ENCODE measurements at regions of chr17 and their contacts with region 1.

Region 1: GRCh38 chr17:6640536-6641373 is at the starts of genes KIAA0753 and TXNDC17:
- DNase-seq: peak; percentile 97
- ATAC-seq: peak; percentile 89
- H3K4me3 Mint-ChIP-seq: peak within 1 kb of the TSS; percentile 89
- H3K27ac Mint-ChIP-seq: peak within 1 kb of the TSS; percentile 97
- H3K4me1 Mint-ChIP-seq: peaks cover 58% of the 10 kb centered on the region
- H3K27me3 Mint-ChIP-seq: no peaks in the 10 kb centered on the region
- CTCF ChIP-seq: no peak
- total RNA-seq, gene KIAA0753: 16.5 to 17.3 TPM
- total RNA-seq, gene TXNDC17: 100.0 to 103 TPM

Region 2: GRCh38 chr17:6473128-6473767 is 167.5 kb before region 1 on chr17:
- CTCF ChIA-PET with region 1: no interaction called
- POLR2A ChIA-PET with region 1: no interaction called
- intact Hi-C with region 1: loop called (anchors 10 kb)
- DNase-seq: peak; percentile 80
- ATAC-seq: peak; percentile 91
- H3K4me3 Mint-ChIP-seq: no peak overlapping the region
- H3K27ac Mint-ChIP-seq: no peak overlapping the region
- H3K4me1 Mint-ChIP-seq: no peaks in the 10 kb centered on the region
- H3K27me3 Mint-ChIP-seq: no peaks in the 10 kb centered on the region
- CTCF ChIP-seq: peak; percentile 94

Region 3: DNA sequence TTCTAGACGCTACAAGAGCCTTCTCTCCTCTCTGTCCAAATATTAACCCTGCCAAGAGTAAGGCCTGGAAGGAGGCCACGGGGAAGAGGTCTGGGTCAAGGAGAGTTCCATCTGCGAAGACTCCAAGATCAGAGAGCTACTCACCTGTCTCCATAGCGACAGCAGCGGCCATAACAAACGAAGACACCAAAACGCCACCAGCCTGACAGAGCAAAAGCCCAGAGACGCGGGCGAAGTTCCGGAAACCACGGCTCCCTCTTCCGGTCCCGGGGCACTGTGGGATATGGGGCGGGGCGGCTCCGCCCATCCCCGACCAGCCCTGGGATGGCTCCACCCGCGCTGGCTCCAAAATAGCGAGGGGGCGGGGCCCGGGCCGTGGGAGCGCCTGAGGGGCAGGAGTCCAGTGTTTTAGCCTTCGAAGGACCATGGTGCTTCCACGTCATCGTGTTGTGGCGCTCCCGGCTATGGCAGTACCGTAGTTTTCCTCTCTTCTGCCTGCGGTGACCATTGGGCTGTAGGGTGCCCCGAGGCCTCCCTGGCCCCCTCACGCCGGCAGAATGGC is 10.7 kb after region 1 on chr17 and contains the starts of genes C17orf100 and MED31:
- CTCF ChIA-PET with region 1: interaction called, 11 read pairs
- POLR2A ChIA-PET with region 1: interaction called, 28 read pairs
- intact Hi-C with region 1: no loop called
- DNase-seq: peak; percentile 96
- ATAC-seq: peak; percentile 96
- H3K4me3 Mint-ChIP-seq: peak within 1 kb of the TSS; percentile 91
- H3K27ac Mint-ChIP-seq: peak within 1 kb of the TSS; percentile 97
- H3K4me1 Mint-ChIP-seq: peaks cover 54% of the 10 kb centered on the region
- H3K27me3 Mint-ChIP-seq: peaks cover 6% of the 10 kb centered on the region
- CTCF ChIP-seq: no peak
- total RNA-seq, gene C17orf100: 1.1 to 1.6 TPM
- total RNA-seq, gene MED31: 21.0 to 24.4 TPM